ENCODE measurements at regions of chr7 and their contacts with region 1.

Region 1: GRCh38 chr7:101743241-101743994 is 74.0 kb upstream of the CUX1 start:
- DNase-seq: peak; percentile 36 to 44
- H3K4me3 ChIP-seq: peak overlapping the region; percentile 19 to 45
- H3K27ac ChIP-seq: no peak overlapping the region
- H3K4me1 ChIP-seq: no peaks in the 10 kb centered on the region
- H3K27me3 ChIP-seq: no peaks in the 10 kb centered on the region
- CTCF ChIP-seq: peak; percentile 44 to 66 (median 56)
- POLR2A ChIP-seq: no peak

Region 2: GRCh38 chr7:101575168-101575567 is 168.2 kb before region 1 on chr7:
- intact Hi-C with region 1: no loop called
- DNase-seq: no peak
- H3K4me3 ChIP-seq: no peak overlapping the region
- H3K27ac ChIP-seq: no peak overlapping the region
- H3K4me1 ChIP-seq: no peaks in the 10 kb centered on the region
- H3K27me3 ChIP-seq: no peaks in the 10 kb centered on the region
- CTCF ChIP-seq: no peak
- POLR2A ChIP-seq: no peak

Region 3: DNA sequence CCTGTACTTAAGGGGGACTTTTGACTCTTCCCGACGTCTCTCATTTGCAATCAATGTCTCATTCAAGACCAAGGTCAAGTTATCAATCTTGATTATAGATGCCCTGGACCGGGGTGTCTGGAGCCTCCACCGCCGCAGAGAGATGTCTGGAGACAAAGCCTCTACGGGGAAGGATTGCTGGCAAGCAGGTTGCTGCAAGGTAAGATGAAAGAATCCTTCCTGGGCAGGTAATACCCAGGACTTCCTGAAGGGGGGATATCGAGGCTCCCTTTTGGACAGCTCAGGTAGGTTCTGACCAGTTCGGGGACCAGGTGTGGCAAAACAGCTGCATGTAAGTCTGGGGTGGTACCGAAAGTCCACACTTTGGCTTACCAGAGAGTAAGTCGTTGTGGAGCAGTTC is 61.5 kb after region 1 on chr7:
- intact Hi-C with region 1: loop called (anchors 10 kb)
- DNase-seq: no peak
- H3K4me3 ChIP-seq: no peak overlapping the region
- H3K27ac ChIP-seq: no peak overlapping the region
- H3K4me1 ChIP-seq: no peaks in the 10 kb centered on the region
- H3K27me3 ChIP-seq: no peaks in the 10 kb centered on the region
- CTCF ChIP-seq: no peak
- POLR2A ChIP-seq: no peak

Region 4: GRCh38 chr7:101913851-101914250 is 170.4 kb after region 1 on chr7:
- intact Hi-C with region 1: no loop called
- DNase-seq: no peak
- H3K4me3 ChIP-seq: peak overlapping the region; percentile 19 to 27
- H3K27ac ChIP-seq: peak overlapping the region; percentile 87 to 91
- H3K4me1 ChIP-seq: peaks cover 10 to 11% of the 10 kb centered on the region in 2 donors
- H3K27me3 ChIP-seq: no peaks in the 10 kb centered on the region
- CTCF ChIP-seq: no peak
- POLR2A ChIP-seq: no peak

Region 5: DNA sequence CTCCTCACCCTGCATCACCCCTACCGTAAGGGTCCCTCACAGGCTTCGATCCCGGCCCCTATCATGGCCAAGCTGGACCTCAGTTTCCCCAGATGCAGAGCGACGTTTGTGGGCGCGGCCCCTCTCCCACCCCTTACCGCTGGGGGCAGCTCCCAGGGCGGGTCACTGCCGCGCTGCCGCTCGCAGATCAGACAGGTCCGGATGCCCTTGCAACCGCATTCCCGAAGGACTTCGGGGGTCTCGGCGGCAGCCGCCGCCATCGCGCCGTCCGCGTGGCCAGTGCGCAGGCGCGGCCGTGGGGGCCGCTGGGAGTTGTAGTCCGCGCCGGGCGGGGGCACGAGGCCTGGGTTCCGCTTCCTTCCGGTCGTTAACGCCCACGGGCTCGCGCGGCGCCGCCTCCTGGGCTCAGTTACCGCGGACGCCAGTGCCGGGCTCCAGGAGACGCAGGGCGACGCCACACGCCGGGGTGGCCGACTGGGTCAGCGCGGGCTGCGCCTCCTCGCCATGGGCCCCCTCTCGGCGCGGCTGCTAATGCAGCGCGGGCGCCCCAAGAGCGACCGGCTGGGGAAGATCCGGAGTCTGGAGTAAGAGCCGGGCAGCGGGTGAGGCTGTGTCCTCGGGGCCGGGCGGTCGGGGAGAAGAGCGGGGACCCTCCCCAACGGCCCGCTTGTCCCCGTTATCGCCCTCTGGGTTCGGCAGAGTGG is 721.3 kb after region 1 on chr7 and contains the starts of genes ALKBH4 and LRWD1:
- intact Hi-C with region 1: no loop called
- DNase-seq: peak; percentile 91 to 93
- H3K4me3 ChIP-seq: peak within 1 kb of the TSS; percentile 81 to 92
- H3K27ac ChIP-seq: peak within 1 kb of the TSS; percentile 74 to 75
- H3K4me1 ChIP-seq: peaks cover 6 to 11% of the 10 kb centered on the region in 2 donors
- H3K27me3 ChIP-seq: no peaks in the 10 kb centered on the region
- CTCF ChIP-seq: peak in 3 of 4 experiments; percentile 28 to 66 (median 33)
- POLR2A ChIP-seq: peak; percentile 40 to 72
- total RNA-seq, gene ALKBH4: 8.7 to 31.3 (median 15.8) TPM
- total RNA-seq, gene LRWD1: 16.7 to 25.6 (median 22.4) TPM